Naive thymus-derived CD8-positive, alpha-beta T cell (primary cell): ENCODE measurements at regions of chr20 and their contacts with region 1.

Region 1: DNA sequence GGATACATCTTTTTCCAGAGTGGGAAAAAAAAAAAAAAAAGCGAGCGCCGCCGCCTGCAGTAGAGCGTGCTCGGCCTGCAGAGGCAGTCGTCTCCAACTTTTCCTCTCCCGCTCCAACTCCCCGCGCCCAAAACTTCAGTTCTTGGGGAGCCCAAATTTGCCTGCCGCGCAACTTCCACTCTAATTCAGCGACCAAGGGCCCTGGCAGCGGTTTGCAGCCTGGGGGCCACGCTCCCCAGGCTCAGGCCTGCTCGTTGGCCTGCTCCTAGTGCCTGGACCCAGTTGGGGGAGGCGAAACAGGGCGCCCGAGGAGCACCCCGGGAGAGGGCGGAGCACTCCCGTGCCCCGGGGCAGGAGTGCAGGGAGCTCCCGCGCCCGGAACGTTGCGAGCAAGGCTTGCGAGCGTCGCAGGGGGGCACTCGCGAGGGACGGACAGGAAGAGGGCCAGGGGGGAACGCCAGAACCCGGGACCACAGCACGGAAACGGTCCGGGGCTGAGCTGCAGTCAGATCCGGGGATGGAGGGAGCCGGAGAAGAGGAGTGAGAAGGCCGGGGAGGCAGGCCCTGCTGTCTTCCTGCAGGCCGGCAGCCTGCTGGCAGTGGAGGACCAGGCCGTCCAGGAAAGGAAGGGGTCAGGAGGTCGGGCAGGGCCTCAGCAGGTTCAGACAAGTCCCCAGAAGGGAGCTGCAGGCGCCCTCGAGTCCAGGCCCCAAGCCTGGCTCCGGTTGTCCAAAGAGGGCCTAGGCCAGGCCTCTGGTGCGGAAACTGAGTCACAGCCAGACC is at the start of gene STX16:
- DNase-seq: peak; percentile 73 to 90 (median 82)
- ATAC-seq: peak; percentile 62 to 66
- H3K4me3 Mint-ChIP-seq: peak within 1 kb of the TSS; percentile 92 to 100 (median 98)
- H3K27ac Mint-ChIP-seq: peak within 1 kb of the TSS; percentile 99 to 100 (median 100)
- H3K4me1 Mint-ChIP-seq: peaks cover 11 to 37% (median 28%) of the 10 kb centered on the region in 4 donors
- H3K27me3 Mint-ChIP-seq: no peaks in the 10 kb centered on the region
- polyA plus RNA-seq, gene STX16: 23.2 to 35.9 (median 30.4) TPM

Region 2: GRCh38 chr20:58308680-58309527 is 342.1 kb before region 1 on chr20:
- POLR2A ChIA-PET with region 1: interaction called, 20 read pairs
- DNase-seq: peak in 8 of 10 donors; percentile 20 to 82 (median 64)
- ATAC-seq: peak; percentile 11 to 18
- H3K4me3 Mint-ChIP-seq: peak overlapping the region; percentile 62 to 88 (median 72)
- H3K27ac Mint-ChIP-seq: peak overlapping the region; percentile 87 to 99 (median 98)
- H3K4me1 Mint-ChIP-seq: peaks cover 18 to 75% (median 60%) of the 10 kb centered on the region in 4 donors
- H3K27me3 Mint-ChIP-seq: no peaks in the 10 kb centered on the region

Region 3: DNA sequence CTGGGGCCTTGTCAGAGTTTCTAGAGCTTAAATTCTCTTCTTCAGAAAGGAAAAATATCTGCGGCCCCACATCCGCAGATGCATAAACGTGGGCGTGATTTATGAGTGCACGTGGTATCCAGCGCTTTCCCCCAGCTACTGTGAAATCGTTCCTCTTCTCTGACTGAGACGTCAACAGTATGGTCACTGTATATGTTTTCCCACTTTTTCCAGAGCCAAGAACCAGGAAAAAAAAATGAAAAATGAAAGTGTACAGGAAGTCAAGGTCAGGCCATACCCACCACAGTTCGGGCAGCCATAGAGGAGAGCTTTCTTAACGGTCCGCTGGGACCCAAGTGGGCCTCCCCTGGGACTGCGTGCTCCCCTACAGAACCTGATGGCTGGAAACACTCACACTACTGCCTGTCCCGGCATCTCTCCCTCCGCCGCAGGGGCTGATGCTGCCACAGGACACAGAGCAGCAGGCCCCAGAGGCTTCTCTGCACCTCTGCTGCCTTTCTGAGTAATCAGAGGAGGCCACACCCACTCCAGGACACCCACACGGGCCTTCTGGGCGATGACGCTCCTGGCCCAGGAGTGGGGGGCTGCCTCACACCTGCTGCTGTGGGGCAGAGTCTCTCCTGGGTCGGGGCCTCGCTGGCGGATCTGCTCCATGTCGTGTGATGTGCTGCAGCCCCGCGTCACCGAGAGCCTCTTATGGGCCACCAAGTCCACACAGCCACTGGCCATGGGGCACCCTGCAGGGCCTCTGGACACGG is 16.3 kb before region 1 on chr20:
- POLR2A ChIA-PET with region 1: interaction called, 47 read pairs
- DNase-seq: peak in 9 of 10 donors; percentile 14 to 69 (median 39)
- ATAC-seq: peak; percentile 88 to 92
- H3K4me3 Mint-ChIP-seq: peak overlapping the region; percentile 55 to 81 (median 70)
- H3K27ac Mint-ChIP-seq: peak overlapping the region; percentile 89 to 97 (median 96)
- H3K4me1 Mint-ChIP-seq: peaks cover 11 to 42% (median 33%) of the 10 kb centered on the region in 4 donors
- H3K27me3 Mint-ChIP-seq: peaks cover 0 to 1% (median 0%) of the 10 kb centered on the region in 5 donors

Region 4: GRCh38 chr20:58692594-58693226 is 41.7 kb after region 1 on chr20 and contains the start of gene NPEPL1:
- POLR2A ChIA-PET with region 1: interaction called, 67 read pairs
- DNase-seq: peak; percentile 21 to 72 (median 58)
- ATAC-seq: peak; percentile 91 to 92
- H3K4me3 Mint-ChIP-seq: peak within 1 kb of the TSS; percentile 75 to 90 (median 82)
- H3K27ac Mint-ChIP-seq: peak within 1 kb of the TSS; percentile 62 to 95 (median 88)
- H3K4me1 Mint-ChIP-seq: peaks cover 3 to 13% (median 9%) of the 10 kb centered on the region in 4 donors
- H3K27me3 Mint-ChIP-seq: no peaks in the 10 kb centered on the region
- polyA plus RNA-seq, gene NPEPL1: 5.3 to 6.3 (median 5.5) TPM

Region 5: DNA sequence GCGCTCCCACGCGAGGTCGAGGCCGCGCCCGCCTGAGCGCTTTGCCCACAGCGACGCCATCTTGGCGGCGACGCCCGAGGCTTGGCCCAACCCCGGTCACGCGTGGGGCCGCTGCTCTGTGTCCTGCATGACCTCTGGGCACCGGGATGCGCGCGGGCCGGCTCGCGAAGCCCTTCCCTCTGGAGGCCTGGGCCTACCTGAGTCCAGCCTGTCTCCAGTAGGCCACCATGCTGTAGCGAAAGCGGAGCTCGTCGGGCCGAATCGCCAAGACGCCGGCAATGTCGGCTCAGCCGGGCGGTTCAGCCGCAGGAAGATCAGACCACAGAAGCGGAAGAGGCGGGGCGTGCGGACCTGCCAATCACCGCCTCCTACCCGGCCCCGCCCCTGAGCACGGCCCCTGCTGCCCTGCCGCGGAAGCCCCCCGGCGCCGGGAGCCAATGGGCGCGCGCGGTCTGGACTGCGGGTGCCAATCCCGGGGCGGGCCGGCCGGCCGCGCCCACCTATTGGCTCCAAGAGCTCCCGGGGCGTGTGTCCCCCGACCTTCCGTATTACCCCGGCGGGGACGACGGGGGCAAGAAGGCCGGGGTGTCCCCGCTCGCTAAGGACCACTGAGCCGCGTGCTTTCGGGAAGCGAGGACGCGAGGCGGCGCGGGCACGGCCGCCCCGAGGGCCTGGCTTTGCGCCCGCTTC is 381.2 kb after region 1 on chr20 and contains the start of gene ATP5F1E:
- POLR2A ChIA-PET with region 1: interaction called, 10 read pairs
- DNase-seq: peak; percentile 94 to 99 (median 97)
- ATAC-seq: peak; percentile 95 to 96
- H3K4me3 Mint-ChIP-seq: peak within 1 kb of the TSS; percentile 87 to 97 (median 94)
- H3K27ac Mint-ChIP-seq: peak within 1 kb of the TSS; percentile 88 to 97 (median 96)
- H3K4me1 Mint-ChIP-seq: peaks cover 27 to 53% (median 50%) of the 10 kb centered on the region in 4 donors
- H3K27me3 Mint-ChIP-seq: no peaks in the 10 kb centered on the region
- polyA plus RNA-seq, gene ATP5F1E: 66.9 to 118 (median 91.4) TPM